ENCODE measurements at regions of chr9 and their contacts with region 1.

Region 1: GRCh38 chr9:89000973-89001916 is 10.0 kb downstream of the S1PR3 start:
- DNase-seq: peak; percentile 52 to 58 (median 54)
- H3K4me3 ChIP-seq: no peak overlapping the region
- H3K4me3 Mint-ChIP-seq: no peak overlapping the region
- H3K27ac ChIP-seq: no peak overlapping the region
- H3K27ac Mint-ChIP-seq: no peak overlapping the region
- H3K4me1 ChIP-seq: no peaks in the 10 kb centered on the region
- H3K4me1 Mint-ChIP-seq: peaks cover 0 to 14% (median 2%) of the 10 kb centered on the region in 4 donors
- H3K27me3 ChIP-seq: no peaks in the 10 kb centered on the region
- H3K27me3 Mint-ChIP-seq: peaks cover 10 to 13% of the 10 kb centered on the region in 2 donors

Region 2: DNA sequence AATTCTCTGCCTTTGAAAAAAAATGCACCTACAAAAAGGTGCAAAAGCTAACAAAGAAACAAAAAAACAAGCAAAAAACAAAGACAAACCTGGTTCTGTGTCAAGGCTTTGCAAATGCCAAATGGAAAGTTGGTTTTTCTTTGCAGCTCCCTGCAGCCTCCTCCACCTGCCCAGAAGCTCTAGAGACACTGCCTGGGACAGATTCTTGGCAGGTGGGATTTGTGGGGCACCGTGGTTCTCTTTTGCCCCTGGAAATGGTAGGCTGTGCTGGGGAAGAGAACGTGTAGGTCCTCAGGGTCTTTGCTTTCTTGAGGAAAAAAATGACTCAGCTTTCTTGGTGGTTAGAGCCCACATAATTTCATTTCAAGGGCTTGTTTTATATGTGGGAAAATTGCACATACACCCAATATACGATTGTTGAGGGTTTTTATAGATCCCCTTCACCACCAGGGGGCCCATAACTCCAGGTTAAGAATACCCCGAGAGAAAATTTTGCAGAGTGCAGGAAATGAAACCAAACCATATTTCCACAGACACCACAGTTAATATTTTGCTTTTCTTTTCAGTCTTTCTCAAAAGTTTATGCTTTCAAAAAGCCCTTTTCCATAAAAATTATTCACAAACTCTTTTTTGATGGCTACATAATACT is 407.6 kb before region 1 on chr9:
- CTCF ChIA-PET with region 1: interaction called, 13 read pairs
- POLR2A ChIA-PET with region 1: no interaction called
- intact Hi-C with region 1: loop called (anchors 1 kb)
- DNase-seq: peak in 4 of 5 donors; percentile 39 to 47 (median 44)
- H3K4me3 ChIP-seq: no peak overlapping the region
- H3K4me3 Mint-ChIP-seq: no peak overlapping the region
- H3K27ac ChIP-seq: no peak overlapping the region
- H3K27ac Mint-ChIP-seq: peak overlapping the region in 1 of 7 donors; percentile 12
- H3K4me1 ChIP-seq: no peaks in the 10 kb centered on the region
- H3K4me1 Mint-ChIP-seq: peaks cover 0 to 4% (median 0%) of the 10 kb centered on the region in 4 donors
- H3K27me3 ChIP-seq: peaks cover 9% of the 10 kb centered on the region
- H3K27me3 Mint-ChIP-seq: peaks cover 8 to 25% of the 10 kb centered on the region in 2 donors

Region 3: DNA sequence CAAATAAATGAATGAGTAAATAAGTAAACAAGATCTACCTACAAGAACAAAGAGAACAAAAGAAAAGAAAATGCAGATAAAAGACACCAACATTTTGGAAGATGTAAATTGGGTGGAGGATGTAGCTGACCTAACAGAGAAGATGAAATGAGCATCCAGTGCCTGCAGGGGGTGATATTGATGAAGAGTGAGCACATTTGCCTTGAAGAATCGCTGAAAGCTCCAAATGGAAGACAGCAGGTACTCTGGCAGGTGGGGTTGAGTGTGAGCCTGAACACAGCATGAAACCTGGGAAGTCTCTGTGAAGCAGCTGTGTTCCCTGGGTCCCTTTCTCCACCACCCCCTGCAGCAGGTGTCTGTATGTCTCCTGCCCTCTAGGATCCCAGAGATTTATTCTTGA is 340.6 kb before region 1 on chr9:
- CTCF ChIA-PET with region 1: no interaction called
- POLR2A ChIA-PET with region 1: no interaction called
- intact Hi-C with region 1: loop called (anchors 2 kb)
- DNase-seq: no peak
- H3K4me3 ChIP-seq: no peak overlapping the region
- H3K4me3 Mint-ChIP-seq: no peak overlapping the region
- H3K27ac ChIP-seq: no peak overlapping the region
- H3K27ac Mint-ChIP-seq: no peak overlapping the region
- H3K4me1 ChIP-seq: no peaks in the 10 kb centered on the region
- H3K4me1 Mint-ChIP-seq: no peaks in the 10 kb centered on the region
- H3K27me3 ChIP-seq: no peaks in the 10 kb centered on the region
- H3K27me3 Mint-ChIP-seq: peaks cover 0 to 6% of the 10 kb centered on the region in 2 donors

Region 4: DNA sequence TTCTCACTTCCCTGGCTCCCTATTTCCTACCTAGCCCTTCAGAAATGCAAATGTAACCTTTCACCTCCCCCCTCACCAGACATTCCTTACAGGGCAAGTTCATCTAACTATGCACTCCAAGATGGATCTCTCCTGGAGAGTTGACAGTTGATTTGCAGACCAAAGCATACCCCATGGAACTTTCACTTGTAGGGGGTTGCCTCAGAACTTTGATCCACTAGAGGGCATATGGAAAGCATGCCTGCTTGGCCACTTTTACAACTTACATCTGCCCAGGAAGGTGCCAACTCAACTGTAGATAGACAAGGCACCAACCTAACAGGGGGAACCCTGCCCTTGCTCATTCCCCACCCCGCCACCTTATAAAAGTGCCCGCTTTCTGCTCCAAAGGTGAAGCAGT is 278.5 kb before region 1 on chr9:
- CTCF ChIA-PET with region 1: no interaction called
- POLR2A ChIA-PET with region 1: no interaction called
- intact Hi-C with region 1: loop called (anchors 2 kb)
- DNase-seq: no peak
- H3K4me3 ChIP-seq: no peak overlapping the region
- H3K4me3 Mint-ChIP-seq: no peak overlapping the region
- H3K27ac ChIP-seq: no peak overlapping the region
- H3K27ac Mint-ChIP-seq: no peak overlapping the region
- H3K4me1 ChIP-seq: no peaks in the 10 kb centered on the region
- H3K4me1 Mint-ChIP-seq: no peaks in the 10 kb centered on the region
- H3K27me3 ChIP-seq: no peaks in the 10 kb centered on the region
- H3K27me3 Mint-ChIP-seq: peaks cover 7 to 16% of the 10 kb centered on the region in 2 donors

Region 5: GRCh38 chr9:88829276-88829675 is 172.0 kb before region 1 on chr9:
- CTCF ChIA-PET with region 1: no interaction called
- POLR2A ChIA-PET with region 1: no interaction called
- intact Hi-C with region 1: no loop called
- DNase-seq: no peak
- H3K4me3 ChIP-seq: no peak overlapping the region
- H3K4me3 Mint-ChIP-seq: no peak overlapping the region
- H3K27ac ChIP-seq: no peak overlapping the region
- H3K27ac Mint-ChIP-seq: no peak overlapping the region
- H3K4me1 ChIP-seq: peaks cover 3% of the 10 kb centered on the region
- H3K4me1 Mint-ChIP-seq: peaks cover 0 to 14% (median 5%) of the 10 kb centered on the region in 4 donors
- H3K27me3 ChIP-seq: peaks cover 16% of the 10 kb centered on the region
- H3K27me3 Mint-ChIP-seq: peaks cover 30 to 45% of the 10 kb centered on the region in 2 donors

Region 6: GRCh38 chr9:89052470-89053097 is 51.3 kb after region 1 on chr9:
- CTCF ChIA-PET with region 1: no interaction called
- POLR2A ChIA-PET with region 1: no interaction called
- intact Hi-C with region 1: no loop called
- DNase-seq: no peak
- H3K4me3 ChIP-seq: no peak overlapping the region
- H3K4me3 Mint-ChIP-seq: no peak overlapping the region
- H3K27ac ChIP-seq: no peak overlapping the region
- H3K27ac Mint-ChIP-seq: no peak overlapping the region
- H3K4me1 ChIP-seq: no peaks in the 10 kb centered on the region
- H3K4me1 Mint-ChIP-seq: no peaks in the 10 kb centered on the region
- H3K27me3 ChIP-seq: no peaks in the 10 kb centered on the region
- H3K27me3 Mint-ChIP-seq: peaks cover 2 to 8% of the 10 kb centered on the region in 2 donors